ENCODE measurements at regions of chr5 and their contacts with region 1.

Region 1: DNA sequence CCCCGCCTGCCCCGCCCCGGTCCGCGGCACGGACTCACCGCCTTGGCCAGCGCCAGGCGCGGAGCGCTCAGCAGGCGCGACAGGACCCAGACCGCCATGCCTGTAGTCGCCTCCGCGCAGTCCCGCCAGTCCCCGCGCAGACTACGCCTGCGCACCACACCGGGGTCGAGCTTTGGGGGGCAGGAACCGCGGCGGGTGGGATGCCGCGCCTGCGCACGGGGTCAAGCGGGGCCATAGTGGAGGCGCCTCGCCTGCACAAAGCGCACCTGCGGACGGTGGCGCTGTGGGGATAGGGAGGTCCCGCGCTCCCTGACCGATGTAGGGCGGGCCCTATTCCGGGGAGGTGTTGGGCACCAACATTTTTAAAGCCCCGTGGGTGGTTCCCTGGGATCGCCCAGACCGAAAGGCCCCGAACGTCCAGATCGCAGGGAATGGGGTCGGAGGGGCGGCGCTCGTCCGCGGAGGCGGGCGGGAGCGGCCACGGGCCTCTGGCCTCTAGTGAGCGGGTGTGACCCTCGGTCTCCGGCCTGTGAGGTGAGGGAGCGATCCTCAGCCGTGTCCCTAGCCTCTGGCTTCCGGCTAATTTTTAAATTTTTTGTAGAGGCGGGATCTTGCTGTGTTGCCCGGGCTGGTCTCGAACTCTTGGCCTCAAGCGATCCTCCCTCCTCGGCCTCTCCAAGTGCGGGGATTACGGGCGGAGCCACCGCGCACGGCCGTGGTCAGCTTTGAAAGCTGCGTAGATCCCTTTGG is 70.8 kb upstream of the LPCAT1 start:
- DNase-seq: peak; percentile 81
- ATAC-seq: peak; percentile 94
- H3K4me3 Mint-ChIP-seq: peak overlapping the region; percentile 82
- H3K27ac Mint-ChIP-seq: peak overlapping the region; percentile 56
- H3K4me1 Mint-ChIP-seq: peaks cover 19% of the 10 kb centered on the region
- H3K27me3 Mint-ChIP-seq: no peaks in the 10 kb centered on the region
- CTCF ChIP-seq: no peak

Region 2: GRCh38 chr5:231661-232060 is 1362.9 kb before region 1 on chr5:
- CTCF ChIA-PET with region 1: no interaction called
- POLR2A ChIA-PET with region 1: no interaction called
- intact Hi-C with region 1: loop called (anchors 10 kb)
- DNase-seq: no peak
- ATAC-seq: no peak
- H3K4me3 Mint-ChIP-seq: no peak overlapping the region
- H3K27ac Mint-ChIP-seq: no peak overlapping the region
- H3K4me1 Mint-ChIP-seq: no peaks in the 10 kb centered on the region
- H3K27me3 Mint-ChIP-seq: no peaks in the 10 kb centered on the region
- CTCF ChIP-seq: no peak

Region 3: GRCh38 chr5:912280-913091 is 682.0 kb before region 1 on chr5:
- CTCF ChIA-PET with region 1: no interaction called
- POLR2A ChIA-PET with region 1: no interaction called
- intact Hi-C with region 1: no loop called
- DNase-seq: no peak
- ATAC-seq: peak; percentile 50
- H3K4me3 Mint-ChIP-seq: no peak overlapping the region
- H3K27ac Mint-ChIP-seq: no peak overlapping the region
- H3K4me1 Mint-ChIP-seq: no peaks in the 10 kb centered on the region
- H3K27me3 Mint-ChIP-seq: no peaks in the 10 kb centered on the region
- CTCF ChIP-seq: no peak

Region 4: DNA sequence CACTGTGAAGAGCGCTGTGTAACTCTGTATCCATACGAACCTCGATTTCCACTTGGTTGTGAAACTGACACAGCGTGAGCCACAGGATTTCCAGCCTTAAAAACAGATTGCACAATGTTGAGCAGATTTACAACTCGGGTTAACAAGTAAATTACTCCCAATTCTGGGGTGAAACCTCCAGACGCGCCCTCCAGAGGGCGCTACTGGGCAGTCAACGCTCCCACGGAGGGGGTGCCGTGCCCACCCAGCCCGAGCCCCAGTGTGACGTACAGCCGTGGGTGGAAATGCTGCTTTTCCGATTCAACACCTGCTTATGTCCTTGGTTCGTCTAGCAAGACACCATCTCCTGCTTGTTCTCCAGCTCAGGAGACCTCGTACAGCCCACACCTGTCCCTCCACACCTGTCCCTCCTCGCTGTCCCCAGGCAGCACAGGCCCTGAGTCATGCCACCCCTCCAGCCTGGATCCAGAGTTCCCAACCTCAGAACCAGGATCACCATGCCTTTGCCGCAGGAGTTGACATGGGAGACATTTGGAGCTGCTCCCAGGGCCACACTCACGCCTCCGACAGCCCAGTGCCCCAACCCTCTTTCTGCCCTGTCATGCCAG is 114.8 kb before region 1 on chr5:
- CTCF ChIA-PET with region 1: interaction called, 9 read pairs
- POLR2A ChIA-PET with region 1: interaction called, 6 read pairs
- intact Hi-C with region 1: loop called (anchors 1 kb)
- DNase-seq: peak; percentile 68
- ATAC-seq: peak; percentile 53
- H3K4me3 Mint-ChIP-seq: peak overlapping the region; percentile 73
- H3K27ac Mint-ChIP-seq: peak overlapping the region; percentile 92
- H3K4me1 Mint-ChIP-seq: peaks cover 61% of the 10 kb centered on the region
- H3K27me3 Mint-ChIP-seq: no peaks in the 10 kb centered on the region
- CTCF ChIP-seq: no peak

Region 5: GRCh38 chr5:1685066-1685465 is 90.5 kb after region 1 on chr5:
- CTCF ChIA-PET with region 1: no interaction called
- POLR2A ChIA-PET with region 1: no interaction called
- intact Hi-C with region 1: no loop called
- DNase-seq: no peak
- ATAC-seq: no peak
- H3K4me3 Mint-ChIP-seq: no peak overlapping the region
- H3K27ac Mint-ChIP-seq: no peak overlapping the region
- H3K4me1 Mint-ChIP-seq: no peaks in the 10 kb centered on the region
- H3K27me3 Mint-ChIP-seq: peaks cover 17% of the 10 kb centered on the region
- CTCF ChIP-seq: no peak